ENCODE measurements at regions of chr4 and their contacts with region 1.

Region 1: GRCh38 chr4:158624889-158625478 is 46.7 kb downstream of the C4orf46 start:
- ATAC-seq: peak in 5 of 8 experiments; percentile 54 to 64 (median 61)
- H3K4me3 ChIP-seq: no peak overlapping the region
- H3K27ac ChIP-seq: no peak overlapping the region
- H3K4me1 ChIP-seq: peaks cover 0 to 8% of the 10 kb centered on the region in 2 donors

Region 2: GRCh38 chr4:158020176-158020575 is 604.8 kb before region 1 on chr4:
- in situ Hi-C with region 1: loop called in 1 of 9 experiments (anchors 25 kb)
- ATAC-seq: peak; percentile 70 to 96 (median 80)
- H3K4me3 ChIP-seq: no peak overlapping the region
- H3K27ac ChIP-seq: peak overlapping the region in 1 of 2 donors; percentile 62
- H3K4me1 ChIP-seq: peaks cover 29 to 41% of the 10 kb centered on the region in 2 donors

Region 3: GRCh38 chr4:158209825-158210807 is 414.9 kb before region 1 on chr4 and contains the start of gene TMEM144:
- in situ Hi-C with region 1: no loop called
- ATAC-seq: peak; percentile 98 to 100 (median 100)
- H3K4me3 ChIP-seq: peak within 1 kb of the TSS; percentile 6 to 36 (median 20)
- H3K27ac ChIP-seq: peak within 1 kb of the TSS in 1 of 2 donors; percentile 20
- H3K4me1 ChIP-seq: peaks cover 0 to 10% of the 10 kb centered on the region in 2 donors
- total RNA-seq, gene TMEM144: 0.38 to 5.1 (median 1.7) TPM

Region 4: DNA sequence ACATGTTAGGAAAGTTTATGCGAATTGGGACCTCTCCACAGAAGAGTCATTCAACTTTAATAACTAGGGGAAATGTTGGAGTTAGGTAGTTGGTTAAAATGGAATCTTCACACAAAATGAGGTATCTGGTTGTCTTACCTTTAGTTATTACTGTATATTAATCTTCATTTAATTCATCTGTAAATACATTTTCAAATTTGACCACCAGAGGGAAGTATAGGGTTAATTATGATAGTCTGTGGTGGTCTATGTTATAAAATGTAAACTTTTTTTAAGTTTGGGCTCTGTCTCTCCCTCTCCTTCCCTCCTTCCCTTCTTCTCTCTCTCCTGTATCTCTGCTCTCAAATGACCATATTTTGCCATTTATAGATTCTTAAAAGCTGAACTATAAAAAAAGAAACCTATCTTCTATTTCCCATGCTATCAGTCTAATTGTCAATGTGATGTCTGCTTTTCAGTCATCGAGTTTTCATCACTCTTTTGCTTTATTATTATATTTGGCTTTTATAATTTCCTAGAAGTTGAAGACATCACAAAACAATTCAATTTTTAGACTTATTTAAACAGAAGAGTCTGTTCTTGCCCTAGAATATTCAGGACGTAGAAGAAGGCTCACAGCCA is 364.9 kb before region 1 on chr4:
- in situ Hi-C with region 1: loop called in 7 of 9 experiments (anchors 10 to 25 kb)
- ATAC-seq: peak in 2 of 8 experiments; percentile 37 to 74
- H3K4me3 ChIP-seq: no peak overlapping the region
- H3K27ac ChIP-seq: no peak overlapping the region
- H3K4me1 ChIP-seq: peaks cover 0 to 10% of the 10 kb centered on the region in 2 donors

Region 5: DNA sequence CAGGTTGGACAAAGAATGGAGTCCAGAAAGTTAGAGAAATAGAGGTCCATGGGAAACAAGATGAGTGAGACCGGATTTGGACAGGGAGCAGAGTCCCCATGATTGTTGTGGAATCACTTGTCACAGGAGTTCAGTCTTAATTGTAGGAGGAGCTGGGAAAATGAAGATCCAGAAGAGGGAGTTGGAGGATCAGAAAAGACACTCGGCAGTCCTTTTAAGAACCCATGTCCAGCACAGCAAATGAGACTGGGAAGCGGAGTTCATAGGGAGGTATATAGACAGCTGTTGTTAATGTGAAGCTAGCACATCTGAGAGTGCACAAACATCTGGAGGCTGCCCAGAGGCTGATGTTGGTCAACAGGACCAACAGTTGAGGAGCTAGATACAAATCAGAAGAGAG is 214.7 kb before region 1 on chr4:
- in situ Hi-C with region 1: loop called in 1 of 9 experiments (anchors 10 kb)
- ATAC-seq: peak in 2 of 8 experiments; percentile 52 to 69
- H3K4me3 ChIP-seq: no peak overlapping the region
- H3K27ac ChIP-seq: no peak overlapping the region
- H3K4me1 ChIP-seq: no peaks in the 10 kb centered on the region

Measured in motor neuron (in vitro differentiated cells).